GM18951 (cell line): ENCODE measurements at regions of chr16 and their contacts with region 1.

Region 1: GRCh38 chr16:86016201-86016871 is 117.4 kb downstream of the IRF8 start:
- POLR2A ChIP-seq: no peak

Region 2: DNA sequence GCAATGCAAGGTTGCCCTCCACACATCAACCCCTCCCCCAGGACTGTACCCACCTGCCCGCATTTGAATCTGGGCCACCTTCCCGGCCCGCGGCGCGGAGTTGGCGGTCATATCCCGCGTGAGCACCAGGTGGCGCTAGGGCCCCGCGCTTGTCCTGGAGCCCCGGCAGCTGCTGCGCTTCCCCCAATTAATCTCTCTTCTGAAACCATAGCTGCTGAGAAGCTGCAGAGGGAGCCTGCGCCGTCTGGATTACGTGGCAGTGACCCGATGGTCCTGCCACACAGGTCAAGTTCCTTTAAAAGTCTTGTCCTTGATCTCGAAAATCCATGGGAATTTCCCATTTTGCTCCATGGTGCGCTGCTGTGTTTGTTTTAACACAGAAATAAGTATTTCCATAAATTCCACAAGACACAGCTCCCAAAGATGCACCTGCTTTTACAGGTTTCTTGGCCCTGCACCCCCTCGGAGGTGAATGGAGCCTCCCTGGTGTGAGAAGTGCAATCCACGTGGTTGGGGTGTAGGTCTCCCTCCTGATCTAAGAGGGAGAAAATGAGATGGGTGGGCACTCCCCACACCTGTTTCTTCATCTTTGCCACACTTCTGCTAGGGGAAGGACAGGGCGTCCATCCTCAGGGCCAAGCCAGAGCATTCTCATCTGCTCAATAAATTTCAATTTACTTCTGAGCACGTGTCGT is 194.7 kb before region 1 on chr16:
- in situ Hi-C with region 1: loop called (anchors 5 kb)
- POLR2A ChIP-seq: no peak

Region 3: DNA sequence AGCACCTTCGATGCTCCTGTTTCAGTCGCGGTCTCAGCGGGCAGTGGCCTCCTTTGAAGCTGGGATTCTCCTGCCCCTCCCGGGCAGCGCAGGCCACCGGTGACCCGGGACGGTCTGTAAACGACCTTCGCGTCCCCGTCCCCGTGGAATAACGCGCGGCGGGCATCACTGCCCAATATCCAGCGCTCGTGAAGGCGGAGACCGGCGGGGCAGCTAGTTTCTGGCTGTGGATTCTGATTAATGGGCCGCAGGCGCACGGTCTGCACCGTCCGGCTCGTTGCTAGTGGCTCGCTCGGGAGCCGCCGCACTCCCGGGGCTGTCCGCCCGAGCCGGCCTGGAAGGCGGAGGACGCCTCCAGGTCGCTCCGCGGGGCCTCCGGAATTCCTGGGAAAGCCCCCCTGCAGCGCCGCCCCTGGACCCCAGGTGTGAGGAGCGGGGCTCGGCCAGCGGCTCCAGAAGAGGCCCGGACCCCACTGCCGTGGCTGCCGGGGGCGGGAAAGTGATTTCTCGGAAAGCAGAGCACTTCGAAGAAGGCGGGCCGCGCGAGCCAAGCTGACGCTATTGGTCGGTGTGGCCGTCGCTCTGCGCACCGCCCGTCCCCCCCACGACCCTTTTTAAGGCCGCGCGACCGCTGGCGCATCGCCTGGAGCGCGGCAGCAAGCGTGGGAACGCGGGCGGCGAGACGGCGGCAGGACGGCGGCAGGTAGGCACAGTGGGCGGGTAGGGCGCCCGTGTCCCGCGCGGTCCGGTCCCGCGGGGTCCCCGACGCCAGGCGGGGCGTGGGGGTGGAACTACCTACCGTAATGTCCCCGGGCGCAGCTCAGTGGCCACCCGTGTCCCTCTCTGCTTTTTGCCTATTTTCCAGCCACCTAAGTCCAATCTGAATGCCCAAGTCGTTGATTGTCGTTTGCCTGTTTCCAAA is 117.6 kb before region 1 on chr16 and contains the start of gene IRF8:
- in situ Hi-C with region 1: loop called (anchors 10 kb)
- POLR2A ChIP-seq: peak; percentile 99